ENCODE measurements at regions of chr2 and their contacts with region 1.

Region 1: DNA sequence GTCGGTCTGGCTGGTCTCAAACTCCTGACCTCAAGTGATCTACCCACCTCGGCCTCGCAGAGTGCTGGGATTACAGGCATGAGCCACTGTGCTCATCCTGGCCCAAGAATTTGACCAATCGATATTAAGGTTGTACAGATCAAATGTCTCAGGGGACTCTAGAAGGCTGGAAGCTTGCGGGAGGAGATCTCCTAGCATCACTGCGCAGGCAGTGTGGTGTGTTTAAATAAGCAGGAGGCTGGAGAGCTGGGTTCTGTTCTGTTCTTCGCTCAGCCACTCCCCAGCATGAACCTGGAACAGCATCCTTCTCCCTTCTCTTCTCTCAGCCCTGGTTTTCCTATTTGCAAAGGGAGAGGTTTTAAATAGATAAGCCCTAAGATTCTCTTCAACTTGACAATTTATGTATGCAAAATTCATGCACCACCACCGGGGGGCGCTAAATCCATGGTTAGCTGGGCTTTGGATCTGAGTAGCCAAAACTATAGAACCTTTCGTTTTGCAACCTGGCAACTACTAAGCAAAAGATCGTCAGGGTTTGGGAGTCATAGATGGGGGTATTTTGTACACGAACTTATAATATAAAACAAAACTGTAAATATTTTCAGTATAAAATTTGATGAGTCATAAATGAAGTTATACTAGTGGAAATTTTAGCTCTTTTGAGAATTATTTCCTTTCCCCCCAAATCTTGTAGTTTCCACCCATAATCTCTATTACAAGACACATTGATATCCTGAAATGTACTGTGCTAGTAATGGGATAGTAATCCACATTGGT is 60.6 kb downstream of the SLC16A14 start:
- DNase-seq: peak; percentile 62 to 91 (median 82)

Region 2: DNA sequence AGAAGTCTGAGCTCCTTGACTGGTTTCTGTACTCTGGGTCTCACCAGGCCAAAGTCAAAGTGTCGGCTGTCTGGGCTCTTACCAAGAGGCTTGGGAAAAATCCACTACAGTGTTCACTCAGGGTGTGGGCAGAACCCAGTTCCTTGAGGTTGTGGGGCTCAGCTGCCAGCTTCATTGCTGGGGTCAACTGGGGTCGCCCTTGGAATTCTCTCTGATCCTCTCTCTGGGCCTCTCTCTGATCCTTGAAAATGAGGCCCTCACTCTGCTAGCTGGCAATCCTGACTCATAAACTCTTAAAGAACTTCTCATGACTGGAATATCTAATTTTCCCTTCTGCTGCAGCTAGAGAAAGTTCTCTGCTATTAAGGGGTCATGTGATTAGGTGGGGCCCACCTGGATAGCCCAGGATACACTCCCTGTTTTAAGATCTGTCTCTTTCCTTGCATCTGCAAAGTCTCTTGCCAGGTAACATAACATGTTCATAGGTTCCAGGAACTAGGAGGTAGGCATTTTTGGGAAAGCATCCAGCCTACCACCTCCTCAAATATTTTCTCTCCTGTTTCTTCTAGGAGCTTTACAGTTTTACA is 145.4 kb after region 1 on chr2:
- intact Hi-C with region 1: loop called (anchors 10 kb)
- DNase-seq: no peak